Activated B cell treated with CpG ODN at 0.5 μM for 24 hours (primary cell): ENCODE measurements at regions of chr9 and their contacts with region 1.

Region 1: DNA sequence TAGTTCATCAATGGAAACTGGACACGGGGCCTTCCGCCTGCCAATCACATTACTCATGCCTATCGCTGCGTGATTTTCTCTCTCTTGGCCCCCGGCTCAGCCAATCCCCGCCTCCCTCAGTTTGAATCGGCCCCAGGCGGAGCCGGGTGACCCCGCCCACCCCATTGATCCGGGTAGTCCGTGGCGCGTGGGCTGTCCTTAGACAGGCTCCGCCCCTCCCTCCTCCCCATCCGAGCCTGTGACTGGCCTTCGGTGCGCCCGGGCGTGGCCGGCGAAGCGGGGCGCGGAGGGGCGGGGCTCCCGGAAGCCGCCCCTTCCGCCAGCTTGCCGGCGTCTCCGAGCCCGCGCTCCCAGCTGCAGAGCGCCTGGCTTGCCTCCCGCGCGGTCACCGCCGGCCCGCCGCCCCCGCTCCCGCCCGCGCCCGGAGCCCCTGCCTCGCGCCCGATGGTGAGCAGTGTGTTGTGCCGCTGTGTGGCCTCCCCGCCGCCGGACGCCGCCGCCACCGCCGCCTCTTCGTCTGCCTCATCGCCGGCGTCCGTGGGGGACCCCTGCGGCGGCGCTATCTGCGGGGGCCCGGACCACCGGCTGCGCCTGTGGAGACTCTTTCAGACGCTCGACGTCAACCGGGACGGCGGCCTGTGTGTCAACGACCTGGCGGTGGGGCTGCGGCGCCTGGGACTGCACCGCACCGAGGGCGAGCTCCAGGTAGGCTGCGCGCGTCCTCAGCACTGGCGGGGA is at the start of gene SLC25A25:
- DNase-seq: peak; percentile 100
- ATAC-seq: peak; percentile 84
- H3K4me3 Mint-ChIP-seq: no peak within 1 kb of the TSS
- H3K27ac Mint-ChIP-seq: peak within 1 kb of the TSS; percentile 60
- H3K4me1 Mint-ChIP-seq: peaks cover 68% of the 10 kb centered on the region
- H3K27me3 Mint-ChIP-seq: no peaks in the 10 kb centered on the region
- CTCF ChIP-seq: no peak
- total RNA-seq, gene SLC25A25: 8.0 and 9.4 TPM in 2 replicates

Region 2: GRCh38 chr9:127244609-127245601 is 823.1 kb before region 1 on chr9:
- CTCF ChIA-PET with region 1: no interaction called
- POLR2A ChIA-PET with region 1: no interaction called
- intact Hi-C with region 1: loop called (anchors 5 kb)
- DNase-seq: peak; percentile 91
- ATAC-seq: peak; percentile 100
- H3K4me3 Mint-ChIP-seq: peak overlapping the region; percentile 90
- H3K27ac Mint-ChIP-seq: peak overlapping the region; percentile 86
- H3K4me1 Mint-ChIP-seq: peaks cover 11% of the 10 kb centered on the region
- H3K27me3 Mint-ChIP-seq: no peaks in the 10 kb centered on the region
- CTCF ChIP-seq: no peak

Region 3: DNA sequence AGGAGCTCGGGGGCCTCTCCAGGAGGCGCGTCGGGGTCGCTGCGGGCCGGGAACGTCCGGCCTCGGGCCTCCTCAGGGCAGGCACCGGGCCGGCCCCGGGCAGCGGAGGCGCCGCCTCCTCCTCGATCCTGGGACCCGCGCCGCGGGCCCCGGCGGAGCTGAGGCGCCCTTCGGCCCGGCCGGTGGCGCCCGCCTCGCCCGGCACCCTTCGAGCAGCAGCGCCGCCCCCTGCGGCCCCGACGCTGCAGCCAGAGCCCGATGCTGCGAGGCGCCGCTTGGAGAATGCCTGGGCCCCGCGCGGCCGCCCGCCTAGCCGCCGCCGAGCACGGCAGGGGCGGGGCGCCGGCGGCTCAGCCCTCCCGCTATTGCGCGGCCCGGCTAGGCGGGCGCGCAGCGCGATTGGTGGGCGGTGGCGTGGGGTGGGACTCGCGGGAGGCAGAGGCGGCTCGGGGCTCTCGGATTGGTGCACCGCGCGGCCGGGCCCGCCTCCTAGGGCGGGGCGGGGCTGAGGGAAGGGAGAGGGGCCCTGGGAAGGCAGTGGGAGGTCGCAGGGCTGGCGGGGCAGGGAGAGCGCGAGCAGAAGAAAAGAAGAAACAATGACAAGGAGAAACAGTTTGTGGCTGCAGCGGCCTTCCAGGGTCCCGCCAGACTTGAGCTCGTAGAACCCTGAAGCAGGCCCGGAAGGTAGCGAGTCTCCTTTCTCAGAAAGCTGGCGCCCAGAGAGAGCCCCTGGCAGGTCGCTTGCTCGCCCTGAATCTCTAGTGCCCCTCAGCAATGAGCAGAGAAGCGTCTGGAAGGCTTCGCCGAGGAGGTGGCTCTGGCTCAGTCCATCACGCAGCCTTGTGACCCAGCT is 87.1 kb before region 1 on chr9 and contains the start of gene EEIG1:
- CTCF ChIA-PET with region 1: no interaction called
- POLR2A ChIA-PET with region 1: interaction called, 13 read pairs
- intact Hi-C with region 1: loop called (anchors 1 kb)
- DNase-seq: peak; percentile 99
- ATAC-seq: peak; percentile 82
- H3K4me3 Mint-ChIP-seq: peak within 1 kb of the TSS; percentile 94
- H3K27ac Mint-ChIP-seq: peak within 1 kb of the TSS; percentile 94
- H3K4me1 Mint-ChIP-seq: peaks cover 72% of the 10 kb centered on the region
- H3K27me3 Mint-ChIP-seq: no peaks in the 10 kb centered on the region
- CTCF ChIP-seq: no peak
- total RNA-seq, gene EEIG1: 65.8 and 88.1 TPM in 2 replicates

Region 4: GRCh38 chr9:128081056-128081455 is 13.0 kb after region 1 on chr9:
- CTCF ChIA-PET with region 1: interaction called, 3 read pairs
- POLR2A ChIA-PET with region 1: interaction called, 9 read pairs
- intact Hi-C with region 1: loop called (anchors 1 kb)
- DNase-seq: no peak
- ATAC-seq: no peak
- H3K4me3 Mint-ChIP-seq: no peak overlapping the region
- H3K27ac Mint-ChIP-seq: no peak overlapping the region
- H3K4me1 Mint-ChIP-seq: peaks cover 42% of the 10 kb centered on the region
- H3K27me3 Mint-ChIP-seq: no peaks in the 10 kb centered on the region
- CTCF ChIP-seq: no peak

Region 5: GRCh38 chr9:128117613-128118471 is 49.8 kb after region 1 on chr9:
- CTCF ChIA-PET with region 1: interaction called, 9 read pairs
- POLR2A ChIA-PET with region 1: interaction called, 15 read pairs
- intact Hi-C with region 1: loop called (anchors 1 kb)
- DNase-seq: peak; percentile 98
- ATAC-seq: peak; percentile 48
- H3K4me3 Mint-ChIP-seq: no peak overlapping the region
- H3K27ac Mint-ChIP-seq: peak overlapping the region; percentile 56
- H3K4me1 Mint-ChIP-seq: peaks cover 42% of the 10 kb centered on the region
- H3K27me3 Mint-ChIP-seq: no peaks in the 10 kb centered on the region
- CTCF ChIP-seq: peak; percentile 99

Region 6: DNA sequence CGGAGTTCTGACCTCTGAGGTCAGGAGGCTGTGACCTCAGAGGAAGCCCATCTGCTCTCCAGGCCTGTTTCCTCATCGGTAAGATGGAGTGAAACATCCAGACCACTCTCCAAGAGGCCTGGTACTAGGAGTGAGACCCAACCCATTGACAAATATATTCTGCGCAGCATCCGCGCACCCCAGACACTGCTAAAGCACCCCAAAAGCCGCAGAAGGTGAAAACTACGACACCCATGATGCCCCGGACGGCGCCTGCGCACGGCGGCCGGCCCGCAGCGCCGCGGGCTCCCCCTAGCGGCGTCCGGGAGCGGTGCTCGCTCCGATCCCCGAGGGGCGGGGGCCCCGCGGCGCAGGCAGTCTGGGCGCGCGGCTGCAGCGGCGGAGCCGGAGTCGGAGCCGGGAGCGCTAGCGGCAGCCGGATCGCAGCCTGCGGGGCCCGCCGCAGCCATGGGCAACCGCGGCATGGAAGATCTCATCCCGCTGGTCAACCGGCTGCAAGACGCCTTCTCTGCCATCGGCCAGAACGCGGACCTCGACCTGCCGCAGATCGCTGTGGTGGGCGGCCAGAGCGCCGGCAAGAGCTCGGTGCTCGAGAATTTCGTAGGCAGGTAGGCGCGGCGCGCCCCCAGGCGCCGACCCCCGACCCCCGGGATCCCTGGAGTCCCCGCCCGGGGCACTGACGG is 135.1 kb after region 1 on chr9 and contains the start of gene DNM1:
- CTCF ChIA-PET with region 1: no interaction called
- POLR2A ChIA-PET with region 1: no interaction called
- intact Hi-C with region 1: no loop called
- DNase-seq: peak; percentile 78
- ATAC-seq: peak; percentile 98
- H3K4me3 Mint-ChIP-seq: peak within 1 kb of the TSS; percentile 85
- H3K27ac Mint-ChIP-seq: peak within 1 kb of the TSS; percentile 56
- H3K4me1 Mint-ChIP-seq: peaks cover 7% of the 10 kb centered on the region
- H3K27me3 Mint-ChIP-seq: peaks cover 18% of the 10 kb centered on the region
- CTCF ChIP-seq: peak; percentile 59
- total RNA-seq, gene DNM1: 0.81 and 0.86 TPM in 2 replicates

Region 7: GRCh38 chr9:128275996-128276573 is 208.0 kb after region 1 on chr9 and contains the starts of genes GOLGA2 and SWI5:
- CTCF ChIA-PET with region 1: no interaction called
- POLR2A ChIA-PET with region 1: no interaction called
- intact Hi-C with region 1: loop called (anchors 2 kb)
- DNase-seq: peak; percentile 96
- ATAC-seq: peak; percentile 95
- H3K4me3 Mint-ChIP-seq: peak within 1 kb of the TSS; percentile 97
- H3K27ac Mint-ChIP-seq: peak within 1 kb of the TSS; percentile 92
- H3K4me1 Mint-ChIP-seq: peaks cover 27% of the 10 kb centered on the region
- H3K27me3 Mint-ChIP-seq: no peaks in the 10 kb centered on the region
- CTCF ChIP-seq: no peak
- total RNA-seq, gene GOLGA2: 46.0 and 53.5 TPM in 2 replicates
- total RNA-seq, gene SWI5: 7.2 and 10.4 TPM in 2 replicates